AG04450 (cell line): ENCODE measurements at regions of chr11 and their contacts with region 1.

Region 1: DNA sequence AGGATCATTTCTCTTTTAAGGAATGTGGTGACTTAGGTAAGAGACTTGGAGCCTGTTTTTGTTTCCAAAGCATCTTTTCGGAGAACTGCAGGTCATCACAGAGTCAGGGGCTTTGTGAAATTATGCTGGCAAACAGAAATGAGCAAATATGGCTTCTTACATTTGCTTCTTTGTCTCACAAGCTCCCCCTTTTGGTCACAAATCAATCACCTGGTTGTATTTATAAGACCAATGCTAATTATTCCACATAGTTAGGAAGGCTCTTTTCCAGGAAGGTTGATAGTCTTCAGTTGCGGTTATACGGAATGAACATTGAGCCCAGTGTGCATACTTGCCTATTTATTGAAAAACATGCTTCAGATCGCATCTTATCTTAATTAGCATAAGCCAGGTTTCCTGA is 34.6 kb upstream of the CEP126 start:
- DNase-seq: no peak
- H3K4me3 ChIP-seq: no peak overlapping the region
- H3K27ac ChIP-seq: no peak overlapping the region
- H3K27me3 ChIP-seq: no peaks in the 10 kb centered on the region
- CTCF ChIP-seq: peak; percentile 54

Region 2: GRCh38 chr11:101478587-101479369 is 401.4 kb before region 1 on chr11:
- CTCF ChIA-PET with region 1: no interaction called
- POLR2A ChIA-PET with region 1: no interaction called
- DNase-seq: no peak
- H3K4me3 ChIP-seq: no peak overlapping the region
- H3K27ac ChIP-seq: no peak overlapping the region
- H3K27me3 ChIP-seq: no peaks in the 10 kb centered on the region
- CTCF ChIP-seq: no peak

Region 3: DNA sequence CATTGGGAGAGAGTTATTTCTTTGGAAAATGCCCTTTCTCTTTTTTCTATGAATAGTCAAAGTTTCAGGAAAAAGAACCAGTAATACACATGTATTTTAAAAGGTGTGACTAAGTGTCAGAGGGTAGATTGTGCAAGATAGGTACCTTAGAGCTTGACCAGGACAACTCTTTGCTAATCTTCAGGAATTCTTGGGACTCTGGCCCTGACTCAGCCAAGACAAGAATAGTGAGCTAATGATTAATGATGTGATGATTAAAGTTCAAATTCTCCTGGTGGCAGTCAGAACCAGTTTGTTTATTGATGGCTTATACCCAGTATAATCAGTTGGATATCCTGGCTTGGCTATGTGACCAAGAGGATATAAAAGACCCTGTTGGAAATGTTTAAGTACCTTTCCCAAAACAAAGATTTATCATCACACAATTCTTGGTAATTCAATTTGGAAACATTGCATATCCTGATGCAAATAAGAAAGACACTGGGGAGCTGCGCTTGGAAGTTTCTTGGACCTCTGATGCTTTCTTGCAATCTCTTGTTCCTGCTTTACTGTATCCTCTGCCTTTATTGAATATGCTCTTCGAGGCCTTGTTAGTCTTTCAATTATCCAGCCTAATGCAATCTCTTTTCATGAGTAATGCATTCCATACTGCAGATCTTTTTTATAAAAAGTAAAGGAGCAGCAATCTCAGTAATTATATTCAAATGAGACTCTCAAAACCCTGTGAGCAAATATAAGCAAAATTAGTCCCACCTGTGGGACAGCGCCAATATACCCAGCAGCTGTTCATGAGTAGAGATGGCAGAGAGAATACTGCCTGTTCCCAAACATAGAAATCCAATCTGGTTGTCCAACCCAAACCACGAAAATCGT is 13.4 kb before region 1 on chr11:
- CTCF ChIA-PET with region 1: interaction called, 62 read pairs
- POLR2A ChIA-PET with region 1: no interaction called
- DNase-seq: no peak
- H3K4me3 ChIP-seq: no peak overlapping the region
- H3K27ac ChIP-seq: no peak overlapping the region
- H3K27me3 ChIP-seq: no peaks in the 10 kb centered on the region
- CTCF ChIP-seq: no peak